B cell (primary cell): ENCODE measurements at regions of chr6 and their contacts with region 1.

Region 1: DNA sequence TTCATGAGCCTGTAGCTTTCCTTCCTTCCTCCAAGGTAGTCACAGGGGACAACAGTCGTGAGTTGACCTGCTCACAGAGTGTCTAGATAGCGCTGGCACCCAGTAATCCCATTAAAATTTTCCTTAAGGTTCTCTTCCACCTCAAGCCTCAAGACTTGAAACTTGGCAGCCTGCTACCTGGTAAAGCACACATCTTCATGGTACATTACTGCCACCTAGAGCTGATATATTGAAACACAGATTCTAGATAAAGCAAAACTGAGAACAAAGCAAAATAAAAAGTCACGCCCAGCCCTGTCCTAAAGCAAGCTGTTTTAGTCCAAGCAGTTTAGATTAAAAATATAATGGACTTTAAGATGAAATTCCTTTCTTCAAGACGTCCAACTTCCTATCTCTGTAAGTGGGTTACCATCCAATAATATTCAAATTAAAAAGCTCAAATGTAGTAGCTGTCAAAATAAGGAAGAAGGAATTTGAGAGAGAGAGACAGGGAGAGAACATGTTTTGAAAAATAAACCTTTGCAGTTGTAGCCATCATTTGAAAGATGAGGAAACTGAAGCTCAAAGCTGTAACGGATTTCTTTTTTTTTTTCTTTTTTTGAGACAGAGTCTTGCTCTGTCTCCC is 50.7 kb upstream of the CD83 start:
- DNase-seq: peak; percentile 81
- ATAC-seq: peak; percentile 88
- H3K4me3 ChIP-seq: no peak overlapping the region
- H3K4me3 Mint-ChIP-seq: no peak overlapping the region
- H3K27ac ChIP-seq: no peak overlapping the region
- H3K27ac Mint-ChIP-seq: peak overlapping the region; percentile 43
- H3K4me1 ChIP-seq: peaks cover 7 to 9% of the 10 kb centered on the region in 2 donors
- H3K4me1 Mint-ChIP-seq: peaks cover 22% of the 10 kb centered on the region
- H3K27me3 ChIP-seq: no peaks in the 10 kb centered on the region
- H3K27me3 Mint-ChIP-seq: peaks cover 4% of the 10 kb centered on the region
- CTCF ChIP-seq: peak; percentile 74

Region 2: GRCh38 chr6:13873285-13874190 is 193.4 kb before region 1 on chr6:
- CTCF ChIA-PET with region 1: interaction called, 21 read pairs
- POLR2A ChIA-PET with region 1: no interaction called
- intact Hi-C with region 1: loop called (anchors 1 kb)
- DNase-seq: peak; percentile 83
- ATAC-seq: peak; percentile 94
- H3K4me3 ChIP-seq: peak overlapping the region; percentile 23 to 66 (median 55)
- H3K4me3 Mint-ChIP-seq: peak overlapping the region; percentile 89
- H3K27ac ChIP-seq: no peak overlapping the region
- H3K27ac Mint-ChIP-seq: peak overlapping the region; percentile 15
- H3K4me1 ChIP-seq: peaks cover 15 to 20% of the 10 kb centered on the region in 2 donors
- H3K4me1 Mint-ChIP-seq: peaks cover 19% of the 10 kb centered on the region
- H3K27me3 ChIP-seq: peaks cover 0 to 4% (median 0%) of the 10 kb centered on the region in 4 experiments
- H3K27me3 Mint-ChIP-seq: no peaks in the 10 kb centered on the region
- CTCF ChIP-seq: peak; percentile 87

Region 3: GRCh38 chr6:14037402-14038277 is 29.3 kb before region 1 on chr6:
- CTCF ChIA-PET with region 1: interaction called, 21 read pairs
- POLR2A ChIA-PET with region 1: no interaction called
- intact Hi-C with region 1: no loop called
- DNase-seq: no peak
- ATAC-seq: no peak
- H3K4me3 ChIP-seq: no peak overlapping the region
- H3K4me3 Mint-ChIP-seq: no peak overlapping the region
- H3K27ac ChIP-seq: no peak overlapping the region
- H3K27ac Mint-ChIP-seq: no peak overlapping the region
- H3K4me1 ChIP-seq: no peaks in the 10 kb centered on the region
- H3K4me1 Mint-ChIP-seq: peaks cover 1% of the 10 kb centered on the region
- H3K27me3 ChIP-seq: no peaks in the 10 kb centered on the region
- H3K27me3 Mint-ChIP-seq: peaks cover 28% of the 10 kb centered on the region
- CTCF ChIP-seq: no peak

Region 4: GRCh38 chr6:14086701-14087100 is 19.8 kb after region 1 on chr6:
- CTCF ChIA-PET with region 1: interaction called, 11 read pairs
- POLR2A ChIA-PET with region 1: interaction called, 3 read pairs
- intact Hi-C with region 1: no loop called
- DNase-seq: no peak
- ATAC-seq: no peak
- H3K4me3 ChIP-seq: no peak overlapping the region
- H3K4me3 Mint-ChIP-seq: no peak overlapping the region
- H3K27ac ChIP-seq: no peak overlapping the region
- H3K27ac Mint-ChIP-seq: peak overlapping the region; percentile 1
- H3K4me1 ChIP-seq: peaks cover 64 to 71% of the 10 kb centered on the region in 2 donors
- H3K4me1 Mint-ChIP-seq: peaks cover 80% of the 10 kb centered on the region
- H3K27me3 ChIP-seq: no peaks in the 10 kb centered on the region
- H3K27me3 Mint-ChIP-seq: no peaks in the 10 kb centered on the region
- CTCF ChIP-seq: no peak

Region 5: GRCh38 chr6:14117158-14118090 is 50.5 kb after region 1 on chr6 and contains the start of gene CD83:
- CTCF ChIA-PET with region 1: interaction called, 54 read pairs
- POLR2A ChIA-PET with region 1: interaction called, 5 read pairs
- intact Hi-C with region 1: no loop called
- DNase-seq: peak; percentile 97
- ATAC-seq: peak; percentile 80
- H3K4me3 ChIP-seq: peak within 1 kb of the TSS; percentile 75 to 100 (median 94)
- H3K4me3 Mint-ChIP-seq: peak within 1 kb of the TSS; percentile 93
- H3K27ac ChIP-seq: peak within 1 kb of the TSS; percentile 99
- H3K27ac Mint-ChIP-seq: peak within 1 kb of the TSS; percentile 97
- H3K4me1 ChIP-seq: peaks cover 37 to 44% of the 10 kb centered on the region in 2 donors
- H3K4me1 Mint-ChIP-seq: peaks cover 37% of the 10 kb centered on the region
- H3K27me3 ChIP-seq: no peaks in the 10 kb centered on the region
- H3K27me3 Mint-ChIP-seq: no peaks in the 10 kb centered on the region
- CTCF ChIP-seq: no peak
- total RNA-seq, gene CD83: 332 and 339 TPM in 2 replicates

Region 6: DNA sequence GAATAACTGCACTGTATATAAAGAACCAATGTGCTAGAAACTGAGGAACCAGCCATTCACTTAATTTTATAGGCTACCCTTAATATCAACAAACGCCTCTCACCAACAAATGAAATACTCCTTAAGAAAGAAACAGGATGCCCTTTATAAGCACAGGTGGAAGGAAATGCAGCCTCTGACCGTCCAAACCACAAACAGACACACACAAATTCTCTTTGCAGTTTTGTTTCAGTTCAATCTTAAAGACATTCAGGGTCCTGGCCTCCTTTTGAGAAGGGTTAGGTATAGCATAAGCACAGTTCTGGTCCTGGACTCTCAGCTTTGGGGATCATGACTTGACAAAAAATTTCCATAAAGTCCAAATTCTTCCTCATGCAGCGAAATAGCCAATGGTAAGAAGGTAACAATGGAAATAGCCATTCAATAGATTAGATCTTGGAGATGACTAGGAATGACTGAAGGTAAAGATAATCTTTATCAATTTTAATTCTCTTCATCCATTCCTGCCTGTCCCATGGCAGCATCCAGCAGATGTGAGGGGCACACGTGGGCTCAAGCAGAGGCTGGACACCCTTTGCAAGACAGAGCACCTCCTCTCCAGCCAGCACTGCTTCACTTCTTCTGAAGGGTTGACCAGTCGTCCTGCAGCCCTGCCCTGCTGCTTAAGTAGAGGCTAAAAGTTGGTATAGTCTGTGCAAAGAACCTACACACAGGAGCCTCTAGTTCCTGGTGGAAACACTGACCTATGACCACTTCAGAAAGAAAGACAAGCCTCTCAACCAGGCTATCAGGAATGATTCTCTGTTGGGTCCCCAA is 174.6 kb after region 1 on chr6:
- CTCF ChIA-PET with region 1: no interaction called
- POLR2A ChIA-PET with region 1: no interaction called
- intact Hi-C with region 1: no loop called
- DNase-seq: no peak
- ATAC-seq: no peak
- H3K4me3 ChIP-seq: peak overlapping the region in 1 of 5 experiments; percentile 26
- H3K4me3 Mint-ChIP-seq: peak overlapping the region; percentile 54
- H3K27ac ChIP-seq: peak overlapping the region in 1 of 2 donors; percentile 45
- H3K27ac Mint-ChIP-seq: peak overlapping the region; percentile 67
- H3K4me1 ChIP-seq: peaks cover 28% of the 10 kb centered on the region in 2 donors
- H3K4me1 Mint-ChIP-seq: peaks cover 39% of the 10 kb centered on the region
- H3K27me3 ChIP-seq: no peaks in the 10 kb centered on the region
- H3K27me3 Mint-ChIP-seq: no peaks in the 10 kb centered on the region
- CTCF ChIP-seq: no peak

Region 7: DNA sequence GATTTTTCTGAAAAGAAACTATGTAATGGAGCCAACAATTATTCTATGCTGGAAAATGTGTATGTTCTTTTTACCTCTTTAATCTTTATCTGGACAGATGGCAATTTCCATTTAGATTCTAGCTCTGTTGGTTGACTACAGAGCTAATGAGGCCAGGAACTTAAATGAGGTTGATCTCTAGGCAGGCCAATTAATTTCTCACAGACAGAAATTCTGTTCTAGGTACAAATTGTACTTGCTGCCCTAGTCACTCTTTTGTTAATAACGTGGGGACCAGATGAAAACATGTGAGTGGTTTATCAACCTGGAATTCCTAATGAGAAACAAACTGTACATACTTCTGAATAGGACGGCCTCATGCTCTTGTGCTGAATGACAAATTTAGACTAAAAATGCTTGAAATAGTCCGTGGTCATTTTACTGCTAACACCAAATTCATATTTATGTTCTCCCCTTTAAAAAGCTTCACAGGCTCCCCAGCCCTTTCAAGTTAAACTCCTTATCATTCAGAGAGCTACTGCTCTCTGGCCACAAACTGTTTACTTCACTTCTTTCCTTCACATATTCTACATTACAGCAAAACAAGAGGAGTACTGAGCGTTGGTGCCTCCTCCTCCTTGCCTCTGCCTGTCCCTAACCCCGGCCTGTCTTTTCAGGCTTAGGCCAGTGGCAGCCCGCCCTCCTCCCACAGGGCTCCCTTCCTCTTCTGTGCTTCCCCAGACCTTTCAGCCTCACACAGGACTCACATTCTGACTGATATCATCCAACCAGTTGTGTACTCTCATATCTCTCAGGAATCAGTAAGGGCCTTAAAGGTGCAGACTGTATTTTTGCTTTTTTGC is 1554.5 kb after region 1 on chr6:
- CTCF ChIA-PET with region 1: interaction called, 3 read pairs
- POLR2A ChIA-PET with region 1: no interaction called
- intact Hi-C with region 1: loop called (anchors 10 kb)
- DNase-seq: peak; percentile 32
- ATAC-seq: peak; percentile 51
- H3K4me3 ChIP-seq: no peak overlapping the region
- H3K4me3 Mint-ChIP-seq: no peak overlapping the region
- H3K27ac ChIP-seq: peak overlapping the region in 1 of 2 donors; percentile 44
- H3K27ac Mint-ChIP-seq: peak overlapping the region; percentile 75
- H3K4me1 ChIP-seq: peaks cover 7 to 11% of the 10 kb centered on the region in 2 donors
- H3K4me1 Mint-ChIP-seq: peaks cover 36% of the 10 kb centered on the region
- H3K27me3 ChIP-seq: no peaks in the 10 kb centered on the region
- H3K27me3 Mint-ChIP-seq: no peaks in the 10 kb centered on the region
- CTCF ChIP-seq: no peak